PC-9 (cell line): ENCODE measurements at regions of chr11 and their contacts with region 1.

Region 1: DNA sequence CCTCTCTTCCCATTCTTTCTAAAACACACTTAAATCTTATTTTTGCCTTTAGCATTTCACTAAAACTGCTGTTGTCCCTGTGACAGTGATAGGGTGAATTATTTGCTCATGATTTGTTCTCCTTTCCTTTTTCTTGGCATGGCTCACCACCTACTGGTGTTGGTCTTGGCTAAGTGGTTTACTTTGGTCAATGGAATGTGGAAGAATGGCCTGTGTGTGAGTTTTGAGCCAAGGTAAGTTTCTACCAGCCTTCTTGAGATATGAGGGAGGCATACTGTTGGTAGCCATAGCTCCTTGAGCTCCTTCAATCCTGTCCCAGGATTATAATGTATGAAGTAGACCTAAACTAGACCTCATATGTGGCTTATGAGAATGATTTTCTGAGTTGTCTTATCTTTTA is 506.3 kb upstream of the RAG2 start:
- DNase-seq: no peak
- H3K4me3 ChIP-seq: no peak overlapping the region
- H3K27ac ChIP-seq: no peak overlapping the region
- H3K4me1 ChIP-seq: no peaks in the 10 kb centered on the region
- H3K27me3 ChIP-seq: no peaks in the 10 kb centered on the region
- CTCF ChIP-seq: no peak

Region 2: GRCh38 chr11:36953976-36954375 is 150.4 kb before region 1 on chr11:
- CTCF ChIA-PET with region 1: no interaction called
- POLR2A ChIA-PET with region 1: no interaction called
- intact Hi-C with region 1: no loop called
- DNase-seq: no peak
- H3K4me3 ChIP-seq: no peak overlapping the region
- H3K27ac ChIP-seq: no peak overlapping the region
- H3K4me1 ChIP-seq: no peaks in the 10 kb centered on the region
- H3K27me3 ChIP-seq: no peaks in the 10 kb centered on the region
- CTCF ChIP-seq: no peak

Region 3: DNA sequence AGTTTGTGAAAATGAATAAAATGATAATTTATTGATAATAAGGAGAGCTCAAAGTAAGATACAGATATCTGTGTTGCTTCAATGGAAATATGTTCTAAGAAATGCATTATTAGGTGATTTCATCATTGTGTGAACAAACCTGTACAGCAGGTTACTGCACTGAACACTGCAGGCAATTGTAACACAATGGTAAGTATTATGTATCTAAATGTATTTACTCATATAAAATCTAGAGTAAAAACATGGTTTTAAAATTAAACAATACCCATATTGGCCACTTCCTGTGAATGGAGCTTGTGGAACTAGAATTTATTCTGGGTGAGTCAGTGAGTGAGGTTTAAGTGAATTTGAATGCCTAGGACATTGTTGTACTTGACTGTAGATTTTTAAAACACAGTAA is 216.5 kb after region 1 on chr11:
- CTCF ChIA-PET with region 1: no interaction called
- POLR2A ChIA-PET with region 1: interaction called, 19 read pairs
- intact Hi-C with region 1: no loop called
- DNase-seq: peak in 1 of 2 experiments; percentile 75
- H3K4me3 ChIP-seq: no peak overlapping the region
- H3K27ac ChIP-seq: no peak overlapping the region
- H3K4me1 ChIP-seq: peaks cover 15% of the 10 kb centered on the region; the same call in 1 of the 2 replicates
- H3K27me3 ChIP-seq: no peaks in the 10 kb centered on the region
- CTCF ChIP-seq: 0 out of 2 replicates have a peak, but pooled peaks have one; percentile 12